PC-9 (cell line): ENCODE measurements at regions of chr12 and their contacts with region 1.

Region 1: DNA sequence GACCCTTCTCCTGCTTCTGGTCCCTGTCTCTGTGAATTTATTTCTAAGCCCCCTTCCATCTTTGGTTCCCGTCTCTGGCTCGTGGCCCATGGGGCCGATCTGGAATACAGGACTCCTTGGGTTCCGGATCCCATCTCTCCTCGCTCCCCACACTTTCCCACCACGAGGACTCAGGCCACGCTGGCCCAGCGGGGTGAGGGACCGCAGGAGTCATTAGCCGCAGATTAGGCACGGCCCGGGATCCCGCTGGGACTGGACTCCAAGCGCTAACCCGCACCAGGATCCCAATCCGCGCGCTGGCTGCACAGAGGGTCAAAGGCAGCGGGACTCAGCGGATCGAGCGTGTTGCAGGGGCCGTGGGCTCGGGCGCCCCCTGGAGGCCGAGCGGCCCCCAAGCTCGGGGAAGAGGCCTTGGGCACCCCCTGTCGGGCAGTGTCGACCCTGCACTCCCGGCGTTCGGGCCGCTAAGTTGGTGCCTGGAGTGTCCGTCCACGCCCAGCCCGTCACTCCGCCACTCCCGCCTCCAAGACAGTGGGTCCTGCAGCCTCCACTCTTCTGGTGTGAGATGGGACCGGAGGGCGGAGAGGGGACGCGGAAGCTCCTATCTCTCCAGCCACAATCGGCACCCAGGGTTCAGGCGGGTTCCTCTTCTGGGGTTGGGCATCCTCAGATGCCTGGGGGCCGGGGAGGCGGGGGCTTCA is 9.5 kb downstream of the SHMT2 start:
- DNase-seq: peak; percentile 48 to 89
- H3K4me3 ChIP-seq: peak overlapping the region; percentile 51; the same call in 1 of the 2 replicates
- H3K27ac ChIP-seq: no peak overlapping the region
- H3K4me1 ChIP-seq: peaks cover 22% of the 10 kb centered on the region; the same call in 1 of the 2 replicates
- H3K27me3 ChIP-seq: peaks cover 30% of the 10 kb centered on the region
- CTCF ChIP-seq: peak; percentile 97

Region 2: DNA sequence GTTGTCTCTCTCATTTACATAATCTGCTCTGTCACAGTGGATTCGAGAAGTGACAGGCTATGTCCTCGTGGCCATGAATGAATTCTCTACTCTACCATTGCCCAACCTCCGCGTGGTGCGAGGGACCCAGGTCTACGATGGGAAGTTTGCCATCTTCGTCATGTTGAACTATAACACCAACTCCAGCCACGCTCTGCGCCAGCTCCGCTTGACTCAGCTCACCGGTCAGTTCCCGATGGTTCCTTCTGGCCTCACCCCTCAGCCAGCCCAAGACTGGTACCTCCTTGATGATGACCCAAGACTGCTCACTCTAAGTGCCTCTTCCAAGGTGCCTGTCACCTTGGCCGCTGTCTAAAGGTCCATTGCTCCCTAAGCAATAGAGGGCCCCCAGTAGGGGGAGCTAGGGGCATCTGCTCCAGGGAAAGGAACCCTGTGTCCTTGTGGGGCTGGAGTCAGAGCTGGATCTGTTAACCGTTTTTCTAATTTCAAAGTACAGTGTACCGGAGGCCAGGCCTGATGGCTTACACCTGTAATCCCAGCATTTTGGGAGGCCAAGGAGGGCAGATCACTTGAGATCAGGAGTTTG is 1154.0 kb before region 1 on chr12:
- CTCF ChIA-PET with region 1: interaction called, 14 read pairs
- POLR2A ChIA-PET with region 1: no interaction called
- intact Hi-C with region 1: no loop called
- DNase-seq: no peak
- H3K4me3 ChIP-seq: no peak overlapping the region
- H3K27ac ChIP-seq: no peak overlapping the region
- H3K4me1 ChIP-seq: peaks cover 42% of the 10 kb centered on the region
- H3K27me3 ChIP-seq: no peaks in the 10 kb centered on the region
- CTCF ChIP-seq: peak; percentile 48; the same call in 1 of the 2 replicates

Region 3: GRCh38 chr12:57698414-57698813 is 459.4 kb after region 1 on chr12:
- CTCF ChIA-PET with region 1: no interaction called
- POLR2A ChIA-PET with region 1: no interaction called
- intact Hi-C with region 1: no loop called
- DNase-seq: no peak
- H3K4me3 ChIP-seq: no peak overlapping the region
- H3K27ac ChIP-seq: no peak overlapping the region
- H3K4me1 ChIP-seq: peaks cover 8% of the 10 kb centered on the region
- H3K27me3 ChIP-seq: no peaks in the 10 kb centered on the region
- CTCF ChIP-seq: no peak